Activated T-helper 1 cell treated with anti-CD3 and anti-CD28 coated beads, Interleukin-12 subunit alpha, Interleukin-12 subunit beta, Interleukin-2, Interleukin-4 antibody, amounts not matched to agents 30 ng/mL and 10 ng/mL and 1 ng/mL, durations not matched to agents 14 hours and 24 hours and 36 hours (primary cell): ENCODE measurements at regions of chr1 and their contacts with region 1.

Region 1: GRCh38 chr1:205849619-205850355 is at the start of gene PM20D1:
- DNase-seq: peak; percentile 86
- H3K4me3 Mint-ChIP-seq: peak within 1 kb of the TSS; percentile 89
- H3K27ac Mint-ChIP-seq: peak within 1 kb of the TSS; percentile 85
- H3K4me1 Mint-ChIP-seq: peaks cover 23% of the 10 kb centered on the region
- H3K27me3 Mint-ChIP-seq: peaks cover 8% of the 10 kb centered on the region
- total RNA-seq, gene PM20D1: 0.29 and 0.39 TPM in 2 replicates

Region 2: DNA sequence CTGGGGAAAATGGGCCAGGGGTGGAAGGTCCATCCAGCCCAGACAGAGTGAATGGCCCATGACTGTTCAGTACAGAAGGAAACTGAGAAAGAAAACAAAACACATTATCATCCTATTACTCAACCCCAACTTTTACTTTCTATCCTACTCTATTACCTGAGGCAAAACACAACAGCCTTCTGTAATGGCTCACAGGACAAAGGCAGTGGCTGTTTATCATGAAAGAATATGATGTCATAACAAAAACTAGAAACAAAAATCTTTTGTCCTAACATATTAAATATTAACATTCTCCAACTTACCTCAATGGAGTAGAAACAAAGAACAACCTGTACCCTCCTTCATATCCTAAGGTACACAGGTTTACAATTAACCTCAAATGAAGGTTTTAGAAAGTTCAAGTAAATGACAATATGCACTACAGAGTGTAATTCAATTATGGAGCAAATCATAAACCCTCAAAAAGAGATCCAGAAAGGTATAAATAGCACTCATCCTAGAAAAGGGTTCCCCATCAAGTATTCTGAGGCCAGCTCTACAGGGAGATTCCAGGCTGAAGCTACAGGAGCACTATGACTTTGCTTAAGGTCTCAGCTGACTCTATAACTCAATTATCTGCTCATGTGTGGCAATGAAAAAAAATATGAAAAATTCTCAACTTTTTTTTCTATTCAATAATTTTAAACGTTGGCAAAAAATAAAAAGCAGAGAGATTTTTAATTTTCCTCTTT is 233.1 kb before region 1 on chr1:
- intact Hi-C with region 1: no loop called
- DNase-seq: no peak
- H3K4me3 Mint-ChIP-seq: no peak overlapping the region
- H3K27ac Mint-ChIP-seq: no peak overlapping the region
- H3K4me1 Mint-ChIP-seq: peaks cover 32% of the 10 kb centered on the region
- H3K27me3 Mint-ChIP-seq: no peaks in the 10 kb centered on the region

Region 3: GRCh38 chr1:205812878-205813754 is 36.7 kb before region 1 on chr1 and contains the start of gene SLC41A1:
- intact Hi-C with region 1: loop called (anchors 1 kb)
- DNase-seq: peak; percentile 81
- H3K4me3 Mint-ChIP-seq: peak within 1 kb of the TSS; percentile 94
- H3K27ac Mint-ChIP-seq: peak within 1 kb of the TSS; percentile 85
- H3K4me1 Mint-ChIP-seq: peaks cover 49% of the 10 kb centered on the region
- H3K27me3 Mint-ChIP-seq: peaks cover 7% of the 10 kb centered on the region
- total RNA-seq, gene SLC41A1: 33.9 and 34.8 TPM in 2 replicates